ENCODE measurements at regions of chr11 and their contacts with region 1.

Region 1: DNA sequence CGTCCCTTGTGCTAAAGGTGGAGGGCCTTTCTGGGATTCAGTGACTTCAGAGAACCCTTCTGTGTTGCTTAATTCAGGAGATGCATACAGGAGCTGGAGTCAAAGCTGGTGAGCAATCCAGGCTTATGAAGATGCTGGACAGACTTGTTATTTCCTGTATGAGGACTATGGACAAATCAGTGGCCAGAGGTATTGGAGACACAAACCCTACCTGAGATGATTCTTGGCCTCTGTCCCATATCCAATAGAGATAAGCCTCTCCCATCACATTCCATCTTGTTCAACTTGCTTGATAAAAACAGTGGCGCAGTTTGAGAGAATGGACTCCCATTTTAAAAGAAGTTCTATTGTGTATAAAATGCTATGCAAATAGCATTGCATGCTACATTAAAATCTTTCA is at the start of gene MRGPRX1:
- DNase-seq: no peak
- ATAC-seq: no peak
- total RNA-seq, gene MRGPRX1: not detected

Region 2: DNA sequence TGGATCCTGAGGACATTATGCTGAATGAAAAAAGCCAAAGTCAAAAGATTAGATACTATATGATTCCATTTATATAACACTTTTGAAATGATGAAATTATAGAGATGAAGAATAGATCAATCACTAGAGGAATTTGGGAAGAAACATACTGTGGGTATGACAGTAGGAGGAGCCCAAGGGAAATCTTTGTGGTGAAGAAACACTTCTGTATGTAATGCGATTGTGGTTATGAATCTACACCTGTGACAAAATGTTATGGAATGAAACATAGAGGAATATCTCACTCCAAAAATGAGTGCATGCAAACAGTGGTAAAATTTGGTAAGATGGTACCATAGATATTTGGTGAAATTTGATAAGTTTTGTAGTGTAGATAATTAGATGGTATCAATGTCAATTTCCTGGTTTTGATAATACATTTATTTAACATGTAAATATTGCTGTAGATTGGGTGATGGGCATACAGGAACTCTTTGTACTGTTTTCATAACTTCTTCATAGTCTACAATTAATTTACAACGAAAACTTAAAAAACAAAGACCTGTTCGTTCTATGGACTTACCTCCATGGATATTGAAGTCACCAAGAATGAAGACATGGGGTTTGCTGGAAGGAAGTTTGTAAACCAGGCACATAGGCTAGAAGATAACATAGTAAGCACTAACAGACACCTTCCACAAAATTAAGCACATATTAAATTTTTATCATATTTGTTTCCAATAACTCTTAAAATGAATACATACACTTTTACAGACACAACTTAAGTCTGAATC is 11.6 kb before region 1 on chr11:
- intact Hi-C with region 1: loop called in 1 of 2 experiments (anchors 2 kb)
- DNase-seq: no peak
- ATAC-seq: no peak

Region 3: GRCh38 chr11:19800162-19800561 is 860.8 kb after region 1 on chr11:
- intact Hi-C with region 1: no loop called
- DNase-seq: peak in 1 of 2 donors; percentile 37
- ATAC-seq: no peak